ENCODE measurements at regions of chr11 and their contacts with region 1.

Region 1: DNA sequence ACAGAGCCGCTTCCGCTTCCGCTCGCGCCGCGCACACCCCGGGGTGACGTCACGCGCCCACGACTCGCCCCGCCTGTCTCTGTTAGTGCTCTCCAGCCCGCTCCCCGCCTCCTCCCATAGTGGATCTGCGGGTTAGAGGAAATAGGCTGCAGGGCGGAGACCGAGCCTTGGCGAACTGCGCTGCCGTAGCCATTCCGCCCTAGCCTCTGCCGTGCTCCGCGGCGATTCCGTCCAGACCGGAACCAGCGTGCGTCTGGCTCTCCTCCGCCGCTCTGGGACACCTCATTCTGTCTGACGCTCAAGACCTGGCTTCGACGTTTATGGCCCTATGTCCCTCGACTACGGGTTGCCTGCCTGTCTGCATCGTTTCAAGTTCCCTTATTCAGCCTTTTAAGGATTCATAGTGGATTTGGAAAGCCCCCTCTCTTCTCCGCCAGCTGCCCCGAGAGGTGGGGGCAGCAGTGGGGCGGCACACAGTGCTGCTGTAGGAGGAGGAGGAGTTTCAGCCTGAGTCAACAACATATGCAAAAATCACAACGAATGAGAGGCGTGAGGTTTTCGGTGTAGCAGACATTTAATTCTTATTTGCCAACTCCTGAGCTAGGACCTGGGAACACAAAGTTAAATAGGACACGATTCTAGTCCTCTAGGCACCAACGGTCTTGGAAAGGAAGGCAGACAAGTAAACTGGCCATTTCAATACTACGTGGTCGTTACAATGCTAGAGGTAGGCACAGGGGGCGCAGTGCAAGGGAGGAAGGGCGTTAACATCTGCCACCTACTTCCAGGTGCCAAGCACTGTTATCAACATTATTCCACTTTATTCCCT is at the start of gene TAF10:
- DNase-seq: peak; percentile 90 to 97 (median 94)
- ATAC-seq: peak; percentile 90 to 92
- H3K4me3 Mint-ChIP-seq: peak within 1 kb of the TSS in 9 of 10 donors; percentile 81 to 95 (median 89)
- H3K27ac Mint-ChIP-seq: peak within 1 kb of the TSS in 8 of 10 donors; percentile 90 to 98 (median 96)
- H3K4me1 Mint-ChIP-seq: peaks cover 27 to 53% (median 30%) of the 10 kb centered on the region in 4 donors
- H3K27me3 Mint-ChIP-seq: no peaks in the 10 kb centered on the region
- polyA plus RNA-seq, gene TAF10: 247 to 332 (median 249) TPM

Region 2: DNA sequence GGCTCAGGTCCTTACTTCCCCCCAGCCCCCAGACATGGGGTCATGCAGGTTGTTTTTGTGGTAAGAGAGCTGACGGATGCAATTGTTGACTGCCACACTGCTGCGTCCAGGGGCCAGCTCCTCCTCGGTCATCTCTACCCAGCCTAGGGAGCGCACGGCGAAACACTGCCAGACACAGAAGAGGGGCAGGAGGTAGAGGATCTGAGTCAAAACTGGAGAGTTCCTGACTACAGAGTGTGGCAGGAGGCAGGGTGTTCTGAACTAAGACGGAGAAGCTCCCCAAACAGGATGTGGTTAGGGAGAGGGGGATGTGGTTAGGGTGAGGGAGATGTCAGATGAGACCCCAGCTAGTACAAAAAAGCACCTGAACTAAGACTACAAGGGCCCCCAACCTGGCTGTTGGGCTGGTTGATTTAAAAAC is 209.9 kb before region 1 on chr11:
- POLR2A ChIA-PET with region 1: interaction called, 14 read pairs
- DNase-seq: peak; percentile 54 to 98 (median 89)
- ATAC-seq: peak; percentile 89 to 90
- H3K4me3 Mint-ChIP-seq: peak overlapping the region; percentile 74 to 97 (median 86)
- H3K27ac Mint-ChIP-seq: peak overlapping the region; percentile 89 to 99 (median 98)
- H3K4me1 Mint-ChIP-seq: peaks cover 68 to 100% (median 93%) of the 10 kb centered on the region in 4 donors
- H3K27me3 Mint-ChIP-seq: peaks cover 0 to 2% (median 0%) of the 10 kb centered on the region in 5 donors

Region 3: GRCh38 chr11:6586434-6587359 is 25.7 kb before region 1 on chr11:
- POLR2A ChIA-PET with region 1: no interaction called
- DNase-seq: no peak
- ATAC-seq: no peak
- H3K4me3 Mint-ChIP-seq: no peak overlapping the region
- H3K27ac Mint-ChIP-seq: peak overlapping the region in 1 of 10 donors; percentile 0
- H3K4me1 Mint-ChIP-seq: peaks cover 0 to 2% (median under 1%) of the 10 kb centered on the region in 4 donors
- H3K27me3 Mint-ChIP-seq: no peaks in the 10 kb centered on the region

Region 4: GRCh38 chr11:6627762-6628241 is 15.4 kb after region 1 on chr11:
- POLR2A ChIA-PET with region 1: interaction called, 27 read pairs
- DNase-seq: peak in 4 of 10 donors; percentile 25 to 51 (median 41)
- ATAC-seq: peak; percentile 87 to 92
- H3K4me3 Mint-ChIP-seq: peak overlapping the region; percentile 7 to 69 (median 52)
- H3K27ac Mint-ChIP-seq: peak overlapping the region; percentile 1 to 90 (median 79)
- H3K4me1 Mint-ChIP-seq: peaks cover 9 to 37% (median 20%) of the 10 kb centered on the region in 4 donors
- H3K27me3 Mint-ChIP-seq: no peaks in the 10 kb centered on the region

Region 5: DNA sequence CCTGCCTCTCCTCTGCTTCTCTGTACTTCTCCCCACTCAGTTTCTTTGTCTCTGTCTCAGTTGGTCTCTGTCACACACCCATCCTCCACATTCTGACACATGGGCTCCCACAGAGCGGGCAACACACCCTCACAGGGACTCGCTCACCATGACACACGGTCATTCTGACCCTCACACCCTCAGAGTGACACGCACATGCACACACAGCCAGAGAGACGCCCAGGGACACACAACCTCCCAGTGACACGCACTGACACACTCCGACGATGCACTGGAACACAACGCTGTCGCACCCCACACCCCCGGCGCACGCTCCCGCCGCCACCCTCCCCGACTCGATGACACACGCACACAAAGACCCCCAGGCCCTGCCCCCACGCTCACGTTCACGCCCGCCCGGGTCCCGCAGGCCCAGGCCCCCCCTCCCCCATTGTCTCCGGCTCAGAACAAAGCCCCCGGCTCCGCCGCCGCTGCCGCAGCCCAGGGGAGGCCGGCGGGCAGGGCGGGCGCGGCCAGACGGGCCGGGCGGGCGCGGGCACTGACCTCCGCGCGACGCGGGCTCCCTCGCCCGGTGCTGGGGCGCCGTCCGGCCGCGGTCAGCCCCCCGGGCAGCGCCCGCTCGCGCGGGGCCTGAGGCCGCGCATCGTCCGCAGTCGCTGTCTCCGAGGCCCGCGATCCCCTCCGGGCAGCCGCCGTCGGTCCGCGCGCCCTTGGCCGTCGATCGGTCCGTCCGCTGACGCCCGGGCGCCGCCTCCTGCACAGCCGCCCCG is 42.8 kb after region 1 on chr11:
- POLR2A ChIA-PET with region 1: interaction called, 38 read pairs
- DNase-seq: peak; percentile 15 to 73 (median 42)
- ATAC-seq: peak; percentile 63 to 66
- H3K4me3 Mint-ChIP-seq: no peak overlapping the region
- H3K27ac Mint-ChIP-seq: no peak overlapping the region
- H3K4me1 Mint-ChIP-seq: peaks cover 4 to 13% (median 10%) of the 10 kb centered on the region in 4 donors
- H3K27me3 Mint-ChIP-seq: no peaks in the 10 kb centered on the region

Region 6: DNA sequence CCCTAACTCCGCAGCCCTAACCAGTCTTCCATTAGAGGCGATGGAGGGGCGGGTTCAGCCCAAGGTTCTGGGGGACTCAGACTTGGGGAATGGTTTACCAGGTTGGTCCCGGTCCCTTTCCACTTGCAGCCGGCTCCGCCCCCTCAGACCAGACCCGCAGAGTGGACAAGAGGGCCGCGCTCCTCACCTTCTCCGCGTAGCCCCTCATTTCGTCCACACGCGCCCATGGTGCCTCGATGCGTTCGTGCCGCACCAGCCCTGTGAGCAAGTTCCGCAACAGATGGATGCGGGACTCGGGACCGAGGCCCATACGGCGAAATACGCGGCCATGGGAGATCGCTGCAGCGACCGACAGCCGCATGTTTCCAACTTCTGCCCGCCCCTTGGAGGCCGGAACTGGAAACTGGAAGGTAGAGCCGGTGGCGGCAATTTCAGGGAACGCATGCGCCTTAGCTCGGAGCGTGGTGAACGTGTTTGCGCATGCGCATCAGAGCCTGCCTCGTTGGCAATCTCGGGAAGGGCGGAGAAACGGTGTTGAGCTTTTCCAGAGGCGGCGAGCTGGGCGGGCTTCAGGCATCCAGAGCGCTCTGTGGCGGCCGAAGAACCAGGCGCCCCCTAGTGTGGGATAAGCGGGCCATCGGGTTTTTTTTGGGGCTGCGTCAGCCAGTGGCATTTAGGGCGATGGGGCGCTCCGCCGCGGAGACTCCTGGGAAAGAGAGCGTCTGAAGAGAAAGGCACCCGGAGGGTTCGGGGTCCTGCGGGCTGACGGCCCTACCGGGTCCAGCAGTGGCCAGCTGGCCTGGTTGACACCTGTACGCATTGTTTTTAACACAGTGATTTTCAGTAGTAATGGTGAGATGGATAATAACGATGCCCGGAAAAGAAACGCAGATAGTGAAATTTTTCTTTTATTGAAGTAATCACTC is 70.8 kb after region 1 on chr11 and contains the start of gene MRPL17:
- POLR2A ChIA-PET with region 1: interaction called, 108 read pairs
- DNase-seq: peak; percentile 92 to 100 (median 99)
- ATAC-seq: peak; percentile 96
- H3K4me3 Mint-ChIP-seq: peak within 1 kb of the TSS; percentile 96 to 100 (median 99)
- H3K27ac Mint-ChIP-seq: peak within 1 kb of the TSS; percentile 97 to 100 (median 99)
- H3K4me1 Mint-ChIP-seq: peaks cover 23 to 49% (median 37%) of the 10 kb centered on the region in 4 donors
- H3K27me3 Mint-ChIP-seq: peaks cover 0 to 2% (median 0%) of the 10 kb centered on the region in 5 donors
- polyA plus RNA-seq, gene MRPL17: 16.2 to 23.6 (median 16.5) TPM

Measured in naive thymus-derived CD8-positive, alpha-beta T cell (primary cell).